Vagina (tissue), 2 donors: ENCODE measurements at regions of chr6 and their contacts with region 1.

Region 1: DNA sequence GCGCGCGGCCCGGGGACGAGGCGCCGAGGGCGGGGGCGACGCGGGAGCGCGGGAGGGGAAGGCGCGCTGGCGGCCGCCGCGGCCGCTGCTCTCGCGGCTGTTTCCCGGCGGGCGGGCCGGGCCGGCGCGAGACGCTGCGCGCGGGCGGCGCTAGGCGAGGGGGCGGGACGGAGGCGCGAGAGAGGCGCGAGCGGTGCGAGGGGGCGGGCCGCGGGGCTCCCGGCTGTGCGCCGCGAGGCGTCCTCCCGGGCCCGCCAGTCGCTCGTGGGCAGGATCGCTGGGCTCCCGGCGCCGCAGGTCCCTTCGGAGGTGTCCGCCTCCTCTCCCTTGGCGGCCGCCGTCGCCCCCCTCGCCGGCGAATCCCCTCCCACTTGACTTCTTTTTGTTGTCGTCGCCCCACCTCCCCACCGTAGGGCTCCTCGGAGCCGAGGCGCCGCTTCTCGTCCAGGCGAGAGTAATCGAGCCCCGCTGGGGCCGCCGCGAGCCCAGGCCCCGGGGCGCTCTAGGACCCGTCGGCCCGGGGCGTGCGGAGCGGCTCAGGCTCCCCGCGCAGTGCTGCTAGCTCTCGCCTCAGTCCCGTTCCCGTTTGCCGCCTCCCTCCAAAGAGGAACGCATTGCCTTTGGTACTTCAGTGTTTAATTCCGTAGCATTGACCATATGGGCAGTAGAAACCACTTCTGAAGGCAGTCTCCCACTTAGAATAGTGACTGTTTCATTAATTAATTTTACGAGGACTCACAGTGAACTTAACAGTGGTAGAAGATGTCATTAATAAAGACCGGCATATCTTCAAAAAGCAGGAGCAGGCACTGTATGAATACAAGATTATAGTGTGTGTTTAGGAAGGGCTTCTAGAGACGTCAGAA is at the start of gene RANBP9:
- DNase-seq: peak in 1 of 2 donors; percentile 94
- H3K4me3 ChIP-seq: peak within 1 kb of the TSS; percentile 81 to 83
- H3K27ac ChIP-seq: peak within 1 kb of the TSS; percentile 84
- H3K4me1 ChIP-seq: peaks cover 39% of the 10 kb centered on the region
- H3K27me3 ChIP-seq: no peaks in the 10 kb centered on the region
- CTCF ChIP-seq: no peak
- POLR2A ChIP-seq: peak in 1 of 2 donors; percentile 37
- total RNA-seq, gene RANBP9: 50.6 TPM

Region 2: DNA sequence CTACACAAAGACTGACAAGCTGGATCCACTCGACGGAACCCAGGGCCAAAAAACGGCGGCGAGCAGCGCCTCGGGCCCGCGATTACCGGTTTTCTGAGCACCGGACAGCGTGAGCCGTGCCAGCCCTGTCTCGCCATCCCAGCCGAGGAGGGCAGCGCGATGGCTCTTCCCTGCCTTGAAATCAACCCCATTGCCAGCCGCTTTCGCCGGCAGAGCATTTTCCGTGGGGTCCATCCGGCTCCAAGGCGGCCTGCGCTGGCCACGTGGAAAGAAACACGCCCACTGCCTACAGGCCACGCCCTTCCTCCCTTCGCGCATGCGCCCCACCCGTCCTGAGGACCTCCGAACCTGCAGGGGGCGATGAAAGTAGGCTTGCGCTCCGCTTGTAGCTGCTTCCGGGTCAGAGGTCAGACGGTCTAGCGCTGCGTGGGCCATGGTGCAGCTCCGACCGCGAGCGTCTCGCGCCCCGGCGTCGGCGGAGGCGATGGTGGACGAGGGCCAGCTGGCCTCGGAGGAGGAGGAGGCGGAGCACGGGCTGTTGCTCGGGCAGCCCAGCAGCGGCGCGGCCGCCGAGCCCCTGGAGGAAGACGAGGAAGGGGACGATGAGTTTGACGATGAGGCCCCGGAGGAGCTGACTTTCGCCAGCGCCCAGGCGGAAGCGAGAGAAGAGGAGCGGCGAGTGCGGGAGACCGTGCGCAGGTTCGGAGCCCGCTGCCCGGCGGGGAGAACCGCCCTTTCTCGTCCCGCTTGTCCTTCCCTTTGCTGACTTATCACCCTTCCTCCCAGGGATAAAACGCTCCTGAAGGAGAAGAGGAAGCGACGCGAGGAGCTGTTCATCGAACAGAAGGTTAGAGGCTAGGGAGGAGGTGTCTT is 96.8 kb before region 1 on chr6 and contains the start of gene NOL7:
- intact Hi-C with region 1: loop called (anchors 5 kb)
- DNase-seq: peak; percentile 98
- H3K4me3 ChIP-seq: peak within 1 kb of the TSS; percentile 83 to 91
- H3K27ac ChIP-seq: peak within 1 kb of the TSS; percentile 89
- H3K4me1 ChIP-seq: peaks cover 25% of the 10 kb centered on the region
- H3K27me3 ChIP-seq: no peaks in the 10 kb centered on the region
- CTCF ChIP-seq: peak; percentile 84 to 90 (median 86)
- POLR2A ChIP-seq: peak in 1 of 2 donors; percentile 73
- total RNA-seq, gene NOL7: 67.0 TPM

Region 3: GRCh38 chr6:13831615-13832014 is 119.6 kb after region 1 on chr6:
- intact Hi-C with region 1: no loop called
- DNase-seq: no peak
- H3K4me3 ChIP-seq: no peak overlapping the region
- H3K27ac ChIP-seq: no peak overlapping the region
- H3K4me1 ChIP-seq: no peaks in the 10 kb centered on the region
- H3K27me3 ChIP-seq: no peaks in the 10 kb centered on the region
- CTCF ChIP-seq: no peak
- POLR2A ChIP-seq: no peak